Activated CD4-positive, alpha-beta T cell treated with anti-CD3 and anti-CD28 coated beads, Interleukin-2, amount 10 ng/mL, durations not matched to agents 24 days and 14 days (primary cell): ENCODE measurements at regions of chr5 and their contacts with region 1.

Region 1: DNA sequence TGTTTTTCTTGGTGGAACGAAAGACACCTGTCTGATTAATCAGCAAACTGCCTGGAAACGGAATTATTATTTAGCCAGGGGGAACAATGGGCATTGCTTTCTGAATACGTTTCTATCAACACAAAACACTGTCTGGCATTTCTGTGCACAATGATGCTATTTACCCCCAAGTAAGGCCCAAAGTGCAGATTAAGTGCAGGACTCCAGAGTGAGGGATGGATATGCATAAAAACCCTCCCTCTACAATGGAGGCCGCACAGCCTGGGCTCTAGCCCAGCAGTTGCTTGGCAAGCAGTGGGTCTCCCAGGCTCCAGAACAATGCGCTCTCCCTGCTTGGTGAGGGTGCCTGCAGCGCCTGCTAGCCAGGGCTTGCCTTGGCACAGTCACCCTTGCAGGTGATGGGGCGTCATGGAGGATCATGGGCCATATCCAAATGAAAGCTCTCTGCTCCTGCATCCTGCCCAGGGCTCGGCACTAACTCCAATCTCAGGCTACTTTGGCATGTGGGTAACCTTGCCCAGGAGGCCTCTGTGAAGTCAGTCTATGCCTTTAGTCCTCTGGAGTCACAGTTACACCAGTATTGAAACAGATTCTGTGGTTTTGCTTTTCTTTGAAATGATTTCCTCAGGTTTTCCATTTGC is 11.5 kb upstream of the SPATA24 start:
- DNase-seq: peak; percentile 81
- H3K4me3 Mint-ChIP-seq: peak overlapping the region; percentile 64
- H3K27ac Mint-ChIP-seq: peak overlapping the region; percentile 95
- H3K4me1 Mint-ChIP-seq: peaks cover 60% of the 10 kb centered on the region
- H3K27me3 Mint-ChIP-seq: no peaks in the 10 kb centered on the region

Region 2: DNA sequence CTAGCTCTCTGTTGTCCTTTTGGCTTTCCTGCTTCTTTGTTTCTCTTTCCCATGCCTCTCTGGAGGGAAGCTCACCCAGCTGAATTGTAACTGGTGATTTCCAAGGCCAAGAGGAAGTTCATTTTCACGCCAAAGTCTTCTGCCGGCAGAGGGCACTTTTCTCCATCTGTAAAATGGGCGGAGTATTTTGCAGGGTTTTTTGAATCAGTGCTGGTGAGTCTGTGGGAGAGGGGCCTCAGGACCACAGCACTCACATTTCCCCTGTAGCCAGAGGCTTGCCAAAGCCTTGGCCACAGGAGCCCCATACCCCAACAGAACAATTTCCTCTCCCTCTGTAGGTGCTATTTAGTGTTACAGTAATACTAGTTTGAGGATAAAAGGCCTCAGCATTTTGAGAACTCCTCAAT is 164.1 kb before region 1 on chr5:
- intact Hi-C with region 1: no loop called
- DNase-seq: peak; percentile 81
- H3K4me3 Mint-ChIP-seq: no peak overlapping the region
- H3K27ac Mint-ChIP-seq: peak overlapping the region; percentile 7
- H3K4me1 Mint-ChIP-seq: peaks cover 18% of the 10 kb centered on the region
- H3K27me3 Mint-ChIP-seq: no peaks in the 10 kb centered on the region

Region 3: GRCh38 chr5:139403787-139404483 is 11.4 kb before region 1 on chr5 and contains the start of gene SPATA24:
- intact Hi-C with region 1: loop called (anchors 1 kb)
- DNase-seq: peak; percentile 99
- H3K4me3 Mint-ChIP-seq: peak within 1 kb of the TSS; percentile 87
- H3K27ac Mint-ChIP-seq: peak within 1 kb of the TSS; percentile 99
- H3K4me1 Mint-ChIP-seq: peaks cover 37% of the 10 kb centered on the region
- H3K27me3 Mint-ChIP-seq: no peaks in the 10 kb centered on the region
- total RNA-seq, gene SPATA24: 4.2 TPM in 2 replicates

Region 4: GRCh38 chr5:139446956-139447779 is 31.8 kb after region 1 on chr5:
- intact Hi-C with region 1: loop called (anchors 1 kb)
- DNase-seq: peak; percentile 78
- H3K4me3 Mint-ChIP-seq: peak overlapping the region; percentile 54
- H3K27ac Mint-ChIP-seq: peak overlapping the region; percentile 96
- H3K4me1 Mint-ChIP-seq: peaks cover 61% of the 10 kb centered on the region
- H3K27me3 Mint-ChIP-seq: no peaks in the 10 kb centered on the region

Region 5: GRCh38 chr5:139458580-139459406 is 43.5 kb after region 1 on chr5:
- intact Hi-C with region 1: loop called (anchors 1 kb)
- DNase-seq: peak; percentile 93
- H3K4me3 Mint-ChIP-seq: peak overlapping the region; percentile 75
- H3K27ac Mint-ChIP-seq: peak overlapping the region; percentile 94
- H3K4me1 Mint-ChIP-seq: peaks cover 57% of the 10 kb centered on the region
- H3K27me3 Mint-ChIP-seq: peaks cover under 1% of the 10 kb centered on the region